ENCODE measurements at regions of chr11 and their contacts with region 1.

Region 1: DNA sequence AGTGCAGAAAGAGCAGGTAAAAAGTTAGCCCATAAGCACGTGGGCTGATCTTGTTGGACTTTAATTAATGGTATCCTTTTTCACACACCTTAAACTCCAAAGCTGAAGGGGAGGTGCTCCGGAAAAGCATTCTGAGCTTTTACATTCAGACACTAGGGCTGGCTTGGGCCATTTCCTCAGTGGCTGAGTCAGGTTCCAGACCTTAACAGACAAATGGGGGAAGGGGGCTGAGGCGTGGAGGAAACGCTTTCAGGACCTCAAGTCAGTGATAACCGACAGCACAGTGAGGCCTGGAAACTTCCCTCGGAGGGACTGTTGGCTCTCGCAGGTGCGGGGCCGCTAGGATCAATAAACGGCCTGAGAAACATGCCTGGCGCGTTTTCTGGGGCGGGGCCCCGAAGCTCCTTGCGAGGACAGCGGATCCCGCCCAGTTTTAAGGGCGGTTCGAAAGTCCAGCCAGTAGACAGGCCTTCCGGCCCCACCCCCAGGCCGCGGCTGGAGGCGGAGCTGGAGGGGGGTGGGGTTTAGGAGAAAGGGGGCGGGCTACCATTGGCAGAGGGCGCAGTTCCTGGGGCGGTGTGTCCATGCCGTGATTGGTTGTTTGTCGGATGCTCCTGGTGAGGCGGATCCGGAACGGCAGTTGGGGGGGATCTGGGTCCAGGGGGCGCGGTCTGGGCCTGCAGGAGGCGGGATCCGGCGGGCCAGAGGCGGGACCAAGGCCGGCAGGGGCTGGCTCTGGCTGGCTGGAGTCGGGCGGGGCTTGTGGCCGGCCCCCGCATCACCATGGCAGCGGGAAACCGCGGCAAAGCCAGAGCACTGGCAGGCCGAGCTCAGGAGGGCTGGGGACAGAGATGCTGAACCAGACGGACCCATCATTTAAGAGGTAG is 8.0 kb downstream of the C11orf52 start:
- DNase-seq: peak; percentile 98
- ATAC-seq: peak; percentile 90
- H3K4me3 Mint-ChIP-seq: peak overlapping the region; percentile 87
- H3K27ac Mint-ChIP-seq: peak overlapping the region; percentile 90
- H3K4me1 Mint-ChIP-seq: peaks cover 17% of the 10 kb centered on the region
- H3K27me3 Mint-ChIP-seq: no peaks in the 10 kb centered on the region
- CTCF ChIP-seq: no peak

Region 2: GRCh38 chr11:111601979-111602864 is 324.5 kb before region 1 on chr11 and contains the start of gene SIK2:
- CTCF ChIA-PET with region 1: no interaction called
- POLR2A ChIA-PET with region 1: no interaction called
- intact Hi-C with region 1: loop called (anchors 1 kb)
- DNase-seq: peak; percentile 83
- ATAC-seq: peak; percentile 90
- H3K4me3 Mint-ChIP-seq: peak within 1 kb of the TSS; percentile 92
- H3K27ac Mint-ChIP-seq: peak within 1 kb of the TSS; percentile 92
- H3K4me1 Mint-ChIP-seq: peaks cover 27% of the 10 kb centered on the region
- H3K27me3 Mint-ChIP-seq: no peaks in the 10 kb centered on the region
- CTCF ChIP-seq: no peak
- total RNA-seq, gene SIK2: 10.0 and 10.2 TPM in 2 replicates

Region 3: GRCh38 chr11:111631666-111632039 is 295.1 kb before region 1 on chr11:
- CTCF ChIA-PET with region 1: no interaction called
- POLR2A ChIA-PET with region 1: no interaction called
- intact Hi-C with region 1: no loop called
- DNase-seq: no peak
- ATAC-seq: no peak
- H3K4me3 Mint-ChIP-seq: no peak overlapping the region
- H3K27ac Mint-ChIP-seq: no peak overlapping the region
- H3K4me1 Mint-ChIP-seq: no peaks in the 10 kb centered on the region
- H3K27me3 Mint-ChIP-seq: no peaks in the 10 kb centered on the region
- CTCF ChIP-seq: no peak

Region 4: DNA sequence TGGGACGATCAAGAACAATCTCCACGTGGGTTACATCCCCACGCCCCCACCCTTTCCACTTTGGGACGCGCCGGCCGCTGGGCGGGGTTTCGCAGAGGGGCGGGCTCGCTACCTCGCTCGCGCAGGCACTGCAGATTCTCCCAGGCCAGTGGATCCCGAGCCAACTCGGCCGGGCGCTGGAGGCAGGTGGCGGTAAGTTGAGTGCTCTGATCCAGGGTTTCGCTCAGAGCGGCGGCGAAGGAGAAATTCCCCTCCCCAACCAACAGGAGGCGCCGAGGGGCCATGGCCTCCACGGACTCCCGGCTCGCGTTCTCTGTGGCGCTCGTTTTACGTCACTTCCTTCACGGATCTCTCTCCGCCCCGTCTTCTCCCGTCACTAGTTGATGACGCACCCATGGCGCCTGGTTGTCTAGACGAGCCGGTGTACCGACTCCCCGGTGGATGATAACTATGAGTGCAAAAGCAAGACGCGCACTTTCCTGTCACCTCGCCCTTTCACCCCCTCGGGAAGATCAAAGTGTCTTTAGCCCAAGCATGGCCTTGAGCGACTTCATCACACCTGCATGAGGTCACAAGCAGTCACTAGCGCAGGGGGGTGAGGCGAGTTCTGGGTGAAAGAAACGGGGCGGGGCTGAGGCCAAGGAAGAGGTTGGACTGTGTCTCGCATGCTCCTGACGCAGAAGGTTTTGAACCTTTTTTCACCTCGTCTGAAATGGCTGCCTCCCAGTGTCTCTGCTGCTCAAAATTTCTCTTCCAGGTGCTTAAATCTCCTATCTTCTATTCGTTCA is 47.7 kb before region 1 on chr11 and contains the starts of genes CFAP68 and FDXACB1:
- CTCF ChIA-PET with region 1: interaction called, 12 read pairs
- POLR2A ChIA-PET with region 1: interaction called, 7 read pairs
- intact Hi-C with region 1: loop called (anchors 1 kb)
- DNase-seq: peak; percentile 88
- ATAC-seq: peak; percentile 88
- H3K4me3 Mint-ChIP-seq: peak within 1 kb of the TSS; percentile 96
- H3K27ac Mint-ChIP-seq: peak within 1 kb of the TSS; percentile 100
- H3K4me1 Mint-ChIP-seq: peaks cover 17% of the 10 kb centered on the region
- H3K27me3 Mint-ChIP-seq: no peaks in the 10 kb centered on the region
- CTCF ChIP-seq: peak; percentile 59
- total RNA-seq, gene CFAP68: 11.6 and 13.7 TPM in 2 replicates
- total RNA-seq, gene FDXACB1: 7.4 and 7.8 TPM in 2 replicates

Region 5: DNA sequence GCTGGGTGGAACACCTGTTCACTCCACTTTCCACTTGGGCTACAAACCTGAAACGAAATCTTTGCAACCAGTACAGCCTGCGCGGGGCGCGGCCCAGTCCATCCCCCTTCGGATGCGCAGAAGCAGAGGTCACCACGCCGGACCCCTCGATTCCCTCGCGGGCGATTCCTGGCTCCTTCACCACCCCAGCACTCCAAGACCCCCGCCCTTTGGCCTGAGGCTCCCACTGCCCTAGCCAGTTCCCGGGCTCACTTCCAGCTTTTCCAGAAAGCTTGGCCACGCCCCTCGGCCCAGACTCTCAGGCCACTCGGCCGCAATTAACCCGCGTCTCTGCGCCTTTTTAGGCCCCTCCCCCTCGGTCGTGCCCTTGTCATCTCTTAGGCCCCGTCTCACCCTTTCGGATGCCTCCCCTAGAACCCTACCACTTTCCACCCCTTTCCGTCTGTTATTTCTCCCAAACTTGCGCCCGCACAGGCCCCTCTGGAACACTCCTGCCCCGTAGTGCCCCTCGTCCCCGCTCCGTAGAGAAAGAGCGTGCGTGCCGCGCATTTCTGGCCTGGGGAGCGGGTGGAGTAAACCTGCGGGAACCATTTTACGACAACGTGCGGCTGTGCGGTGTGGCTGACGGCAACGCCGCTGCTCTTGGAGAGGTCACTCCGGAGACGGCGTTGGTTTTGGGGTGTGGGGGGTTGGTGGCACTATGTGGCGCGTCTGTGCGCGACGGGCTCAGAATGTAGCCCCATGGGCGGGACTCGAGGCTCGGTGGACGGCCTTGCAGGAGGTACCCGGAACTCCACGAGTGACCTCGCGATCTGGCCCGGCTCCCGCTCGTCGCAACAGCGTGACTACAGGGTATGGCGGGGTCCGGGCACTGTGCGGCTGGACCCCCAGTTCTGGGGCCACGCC is 98.3 kb after region 1 on chr11 and contains the start of gene DLAT:
- CTCF ChIA-PET with region 1: interaction called, 4 read pairs
- POLR2A ChIA-PET with region 1: interaction called, 5 read pairs
- intact Hi-C with region 1: loop called (anchors 1 kb)
- DNase-seq: peak; percentile 78
- ATAC-seq: peak; percentile 77
- H3K4me3 Mint-ChIP-seq: peak within 1 kb of the TSS; percentile 100
- H3K27ac Mint-ChIP-seq: peak within 1 kb of the TSS; percentile 100
- H3K4me1 Mint-ChIP-seq: peaks cover 37% of the 10 kb centered on the region
- H3K27me3 Mint-ChIP-seq: no peaks in the 10 kb centered on the region
- CTCF ChIP-seq: no peak
- total RNA-seq, gene DLAT: 27.5 and 31.5 TPM in 2 replicates

Region 6: GRCh38 chr11:112086422-112087191 is 159.9 kb after region 1 on chr11 and contains the starts of genes SDHD and TIMM8B:
- CTCF ChIA-PET with region 1: interaction called, 5 read pairs
- POLR2A ChIA-PET with region 1: interaction called, 20 read pairs
- intact Hi-C with region 1: loop called (anchors 1 kb)
- DNase-seq: peak; percentile 88
- ATAC-seq: peak; percentile 88
- H3K4me3 Mint-ChIP-seq: peak within 1 kb of the TSS; percentile 100
- H3K27ac Mint-ChIP-seq: peak within 1 kb of the TSS; percentile 97
- H3K4me1 Mint-ChIP-seq: peaks cover 45% of the 10 kb centered on the region
- H3K27me3 Mint-ChIP-seq: no peaks in the 10 kb centered on the region
- CTCF ChIP-seq: no peak
- total RNA-seq, gene SDHD: 79.9 and 82.1 TPM in 2 replicates
- total RNA-seq, gene TIMM8B: 37.0 and 39.6 TPM in 2 replicates

Region 7: GRCh38 chr11:113314389-113315301 is 1387.9 kb after region 1 on chr11 and contains the start of gene TTC12:
- CTCF ChIA-PET with region 1: no interaction called
- POLR2A ChIA-PET with region 1: no interaction called
- intact Hi-C with region 1: loop called (anchors 10 kb)
- DNase-seq: peak; percentile 98
- ATAC-seq: peak; percentile 99
- H3K4me3 Mint-ChIP-seq: peak within 1 kb of the TSS; percentile 85
- H3K27ac Mint-ChIP-seq: peak within 1 kb of the TSS; percentile 83
- H3K4me1 Mint-ChIP-seq: peaks cover 19% of the 10 kb centered on the region
- H3K27me3 Mint-ChIP-seq: no peaks in the 10 kb centered on the region
- CTCF ChIP-seq: no peak
- total RNA-seq, gene TTC12: 21.3 and 25.2 TPM in 2 replicates

Measured in activated B cell treated with CpG ODN at 0.5 μM for 24 hours (primary cell).